HAP-1 (cell line): ENCODE measurements at regions of chr10 and their contacts with region 1.

Region 1: GRCh38 chr10:17607603-17608332 is 9.4 kb downstream of the HACD1 start:
- DNase-seq: peak; percentile 37 to 86
- H3K4me3 ChIP-seq: no peak overlapping the region
- H3K4me1 ChIP-seq: peaks cover 21% of the 10 kb centered on the region
- H3K27me3 ChIP-seq: no peaks in the 10 kb centered on the region

Region 2: GRCh38 chr10:17375936-17376584 is 231.7 kb before region 1 on chr10:
- in situ Hi-C with region 1: no loop called
- DNase-seq: peak in 1 of 2 experiments; percentile 61
- H3K4me3 ChIP-seq: no peak overlapping the region
- H3K4me1 ChIP-seq: peaks cover 8% of the 10 kb centered on the region; the same call in 1 of the 2 replicates
- H3K27me3 ChIP-seq: no peaks in the 10 kb centered on the region

Region 3: GRCh38 chr10:17742918-17743317 is 135.2 kb after region 1 on chr10:
- in situ Hi-C with region 1: loop called (anchors 5 kb)
- DNase-seq: peak; percentile 39 to 88
- H3K4me3 ChIP-seq: no peak overlapping the region
- H3K4me1 ChIP-seq: peaks cover 3% of the 10 kb centered on the region; the same call in 1 of the 2 replicates
- H3K27me3 ChIP-seq: no peaks in the 10 kb centered on the region

Region 4: DNA sequence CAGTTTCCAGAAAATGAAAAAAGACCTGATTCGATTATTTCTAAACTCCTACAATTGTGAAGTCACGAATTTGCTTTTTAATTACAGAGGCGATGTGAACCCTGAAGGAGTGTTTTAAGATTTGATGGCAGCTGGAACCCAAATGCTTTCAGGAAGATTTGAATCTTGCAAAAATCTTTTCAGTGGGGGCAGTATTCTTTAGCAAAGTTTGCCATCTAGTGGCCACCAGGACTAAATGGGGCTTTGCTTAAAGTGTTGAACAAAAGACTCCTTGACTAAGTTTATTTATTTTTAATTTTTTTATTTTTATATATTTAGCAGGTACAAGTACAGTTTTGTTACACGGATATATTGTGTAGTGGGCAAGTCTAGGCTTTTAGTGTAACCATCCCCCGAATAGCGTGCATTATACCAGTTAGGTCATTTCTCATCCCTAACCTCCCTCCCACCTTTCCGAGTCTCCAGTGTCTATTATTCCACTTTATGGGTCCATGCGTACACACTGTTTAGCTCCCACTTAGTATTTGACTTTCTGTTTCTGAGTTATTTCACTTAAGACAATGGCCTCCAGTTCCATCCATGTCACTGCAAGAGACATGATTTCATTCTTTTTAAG is 631.2 kb after region 1 on chr10:
- in situ Hi-C with region 1: loop called (anchors 10 kb)
- DNase-seq: peak; percentile 32 to 60
- H3K4me3 ChIP-seq: no peak overlapping the region
- H3K4me1 ChIP-seq: peaks cover 8% of the 10 kb centered on the region
- H3K27me3 ChIP-seq: no peaks in the 10 kb centered on the region